Activated CD4-positive, alpha-beta T cell treated with anti-CD3 and anti-CD28 coated beads for 36 hours (primary cell): ENCODE measurements at regions of chr15 and their contacts with region 1.

Region 1: DNA sequence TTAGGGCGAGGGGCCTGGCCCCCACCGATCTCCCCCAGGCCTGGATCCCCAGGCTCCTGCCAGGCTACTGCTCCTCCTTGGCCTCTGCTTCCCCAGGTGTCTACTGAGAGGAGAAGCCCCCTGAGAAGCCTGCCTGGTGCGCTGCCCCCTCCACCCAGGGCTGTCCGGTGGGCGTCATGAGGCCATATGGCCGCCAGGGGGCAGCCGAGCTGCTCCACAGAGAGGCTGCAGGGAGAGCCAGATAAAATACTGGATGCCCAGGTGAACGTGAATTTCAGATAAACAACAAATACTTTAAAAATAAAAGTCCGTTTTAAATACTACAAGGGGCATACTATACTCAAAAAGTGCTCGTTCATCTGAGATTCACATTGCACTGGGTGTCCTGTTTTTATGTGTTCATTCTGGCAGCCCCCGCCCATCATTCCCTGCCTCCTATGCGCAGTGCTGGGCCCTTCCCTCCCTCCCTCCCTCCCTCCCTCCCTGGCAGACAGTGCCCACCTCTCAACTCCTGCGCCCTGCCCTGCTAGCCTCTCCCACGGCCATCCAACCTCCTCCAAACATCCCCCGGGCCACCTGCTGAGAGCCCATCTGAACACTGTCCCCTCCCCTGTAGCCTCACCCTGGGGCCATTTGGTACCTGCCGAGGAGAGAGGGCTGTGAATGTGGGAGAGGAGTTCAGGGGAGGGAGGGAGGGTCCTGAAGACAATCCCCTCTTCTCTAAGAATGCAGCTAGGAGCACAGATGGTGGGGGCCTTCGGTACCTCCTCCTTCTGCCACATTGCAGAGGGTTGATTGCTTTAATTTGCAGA is 29.6 kb downstream of the PSTPIP1 start:
- DNase-seq: peak; percentile 82
- ATAC-seq: no peak
- H3K4me3 Mint-ChIP-seq: no peak overlapping the region
- H3K27ac Mint-ChIP-seq: peak overlapping the region; percentile 76
- H3K4me1 Mint-ChIP-seq: peaks cover 48% of the 10 kb centered on the region
- H3K27me3 Mint-ChIP-seq: no peaks in the 10 kb centered on the region

Region 2: GRCh38 chr15:76636059-76636458 is 388.4 kb before region 1 on chr15:
- CTCF ChIA-PET with region 1: no interaction called
- POLR2A ChIA-PET with region 1: no interaction called
- intact Hi-C with region 1: no loop called
- DNase-seq: no peak
- ATAC-seq: no peak
- H3K4me3 Mint-ChIP-seq: no peak overlapping the region
- H3K27ac Mint-ChIP-seq: no peak overlapping the region
- H3K4me1 Mint-ChIP-seq: no peaks in the 10 kb centered on the region
- H3K27me3 Mint-ChIP-seq: no peaks in the 10 kb centered on the region

Region 3: DNA sequence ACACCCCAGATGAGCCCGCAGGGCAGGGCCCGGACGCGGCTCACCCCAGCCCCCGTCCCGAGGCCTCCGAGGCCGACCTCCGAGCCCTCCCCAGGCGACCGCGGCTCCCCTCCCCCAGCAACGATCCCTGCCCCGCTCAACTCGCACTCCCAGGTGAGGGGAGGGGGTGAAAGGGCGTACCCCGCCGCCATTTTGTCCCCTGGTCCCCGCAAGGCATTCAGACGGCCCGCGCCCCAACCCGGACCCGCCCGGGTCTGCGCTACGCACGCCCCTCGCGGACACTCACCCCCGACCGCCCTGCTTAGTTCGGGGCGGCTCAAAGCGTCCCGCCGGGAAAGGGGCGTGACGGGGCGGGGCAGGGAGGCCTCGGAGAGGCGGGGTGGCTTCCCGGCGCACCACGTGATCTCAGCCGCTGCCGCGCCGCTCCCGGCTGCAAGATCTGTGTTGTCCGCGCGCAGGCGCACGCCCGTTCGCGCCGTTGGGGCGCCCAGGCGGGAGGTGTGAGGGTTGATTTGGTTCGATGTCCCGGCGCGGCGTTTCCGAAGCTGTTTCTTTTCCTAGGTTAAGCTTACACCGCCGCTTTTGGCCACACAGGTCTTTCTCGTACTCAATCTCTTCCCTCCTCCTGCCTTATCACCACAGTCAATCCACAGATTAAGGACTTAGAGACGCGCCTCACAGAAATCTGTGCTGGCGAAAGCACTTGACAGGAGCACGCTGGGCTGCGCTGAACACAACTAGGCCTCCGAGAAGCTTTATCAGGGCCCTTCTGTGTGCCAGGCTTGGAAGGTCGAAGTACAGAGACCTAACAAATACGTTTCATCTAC is 119.3 kb before region 1 on chr15 and contains the start of gene SCAPER:
- CTCF ChIA-PET with region 1: interaction called, 4 read pairs
- POLR2A ChIA-PET with region 1: no interaction called
- intact Hi-C with region 1: loop called (anchors 5 kb)
- DNase-seq: peak; percentile 96
- ATAC-seq: peak; percentile 92
- H3K4me3 Mint-ChIP-seq: peak within 1 kb of the TSS; percentile 87
- H3K27ac Mint-ChIP-seq: peak within 1 kb of the TSS; percentile 92
- H3K4me1 Mint-ChIP-seq: peaks cover 34% of the 10 kb centered on the region
- H3K27me3 Mint-ChIP-seq: no peaks in the 10 kb centered on the region
- total RNA-seq, gene SCAPER: 25.9 to 35.2 TPM

Region 4: GRCh38 chr15:76994971-76995945 is 29.2 kb before region 1 on chr15 and contains the start of gene PSTPIP1:
- CTCF ChIA-PET with region 1: interaction called, 26 read pairs
- POLR2A ChIA-PET with region 1: interaction called, 4 read pairs
- intact Hi-C with region 1: no loop called
- DNase-seq: peak; percentile 87
- ATAC-seq: peak; percentile 62
- H3K4me3 Mint-ChIP-seq: peak within 1 kb of the TSS; percentile 97
- H3K27ac Mint-ChIP-seq: peak within 1 kb of the TSS; percentile 96
- H3K4me1 Mint-ChIP-seq: peaks cover 57% of the 10 kb centered on the region
- H3K27me3 Mint-ChIP-seq: no peaks in the 10 kb centered on the region
- total RNA-seq, gene PSTPIP1: 100 to 125 TPM

Region 5: DNA sequence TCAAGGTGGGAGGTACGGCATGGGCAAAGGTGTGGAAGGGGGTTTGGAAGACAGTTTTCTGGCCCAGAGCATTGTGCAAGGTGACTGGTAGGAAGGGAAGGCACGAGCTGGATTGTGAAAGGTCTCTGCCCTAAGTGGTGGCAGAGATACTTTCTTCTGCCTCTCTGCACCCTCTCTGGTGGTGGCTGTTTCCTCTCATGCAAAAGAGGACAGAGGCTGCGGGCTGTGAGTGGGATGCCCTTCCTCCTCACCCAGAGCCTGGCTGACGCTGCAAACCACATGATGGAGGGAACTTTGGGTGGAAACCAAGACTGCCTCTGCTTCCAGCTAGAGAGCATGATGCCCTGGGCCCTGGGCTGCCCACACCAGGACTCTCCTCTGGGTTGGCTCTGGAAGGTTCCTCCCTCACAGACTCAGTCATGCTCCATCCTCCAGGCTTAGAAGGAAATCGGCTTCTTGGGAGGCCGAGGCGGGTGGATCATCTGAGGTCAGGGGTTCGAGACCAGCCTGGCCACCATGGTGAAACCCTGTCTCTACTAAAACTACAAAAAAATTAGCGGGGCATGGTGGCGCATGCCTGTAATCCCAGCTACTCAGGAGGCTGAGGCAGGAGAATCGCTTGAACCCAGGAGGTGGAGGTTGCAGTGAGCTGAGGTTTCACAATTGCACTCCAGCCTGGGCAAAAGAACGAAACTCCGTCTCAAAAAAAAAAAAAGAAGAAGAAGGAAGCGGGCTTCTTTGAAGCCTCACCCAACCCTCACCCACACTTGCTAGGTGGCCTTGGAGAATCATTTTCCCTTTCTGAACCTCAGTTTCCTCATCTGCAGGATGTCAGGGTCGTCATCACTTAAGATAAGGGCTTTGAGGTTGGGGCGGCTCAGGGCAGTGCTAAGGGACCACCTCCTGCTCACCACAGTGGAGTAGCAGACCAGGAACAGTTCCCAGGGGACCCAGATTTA is 21.2 kb before region 1 on chr15:
- CTCF ChIA-PET with region 1: interaction called, 26 read pairs
- POLR2A ChIA-PET with region 1: no interaction called
- intact Hi-C with region 1: loop called in 1 of 2 experiments (anchors 2 kb)
- DNase-seq: peak; percentile 88
- ATAC-seq: peak; percentile 86
- H3K4me3 Mint-ChIP-seq: peak overlapping the region; percentile 67
- H3K27ac Mint-ChIP-seq: peak overlapping the region; percentile 94
- H3K4me1 Mint-ChIP-seq: peaks cover 84% of the 10 kb centered on the region
- H3K27me3 Mint-ChIP-seq: no peaks in the 10 kb centered on the region

Region 6: GRCh38 chr15:77013776-77014131 is 10.7 kb before region 1 on chr15:
- CTCF ChIA-PET with region 1: interaction called, 13 read pairs
- POLR2A ChIA-PET with region 1: interaction called, 3 read pairs
- intact Hi-C with region 1: loop called in 1 of 2 experiments (anchors 1 kb)
- DNase-seq: peak; percentile 95
- ATAC-seq: peak; percentile 89
- H3K4me3 Mint-ChIP-seq: peak overlapping the region; percentile 54
- H3K27ac Mint-ChIP-seq: peak overlapping the region; percentile 90
- H3K4me1 Mint-ChIP-seq: peaks cover 92% of the 10 kb centered on the region
- H3K27me3 Mint-ChIP-seq: no peaks in the 10 kb centered on the region

Region 7: GRCh38 chr15:77034695-77035489 is 10.4 kb after region 1 on chr15:
- CTCF ChIA-PET with region 1: interaction called, 11 read pairs
- POLR2A ChIA-PET with region 1: interaction called, 3 read pairs
- intact Hi-C with region 1: no loop called
- DNase-seq: peak; percentile 80
- ATAC-seq: peak; percentile 61
- H3K4me3 Mint-ChIP-seq: no peak overlapping the region
- H3K27ac Mint-ChIP-seq: no peak overlapping the region
- H3K4me1 Mint-ChIP-seq: no peaks in the 10 kb centered on the region
- H3K27me3 Mint-ChIP-seq: no peaks in the 10 kb centered on the region